ENCODE measurements at regions of chr6 and their contacts with region 1.

Region 1: DNA sequence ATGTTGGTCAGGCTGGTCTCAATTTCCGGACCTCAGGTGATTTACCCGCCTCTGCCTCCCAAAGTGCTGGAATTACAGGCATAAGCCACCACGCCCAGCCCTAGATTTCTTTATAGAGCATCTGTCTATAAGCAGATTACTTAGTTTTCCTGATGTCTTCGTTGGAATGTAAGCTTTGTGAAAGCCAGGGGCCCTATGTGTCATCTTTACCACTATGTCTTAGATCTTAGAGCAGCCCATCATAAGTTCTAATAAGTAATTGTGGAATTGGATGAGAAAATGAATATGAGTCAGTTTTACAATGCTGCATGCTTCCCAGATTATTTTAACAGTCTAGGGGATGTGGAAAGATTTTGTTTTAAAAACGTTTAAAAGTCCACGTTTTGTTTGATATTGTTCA is 9.1 kb upstream of the ZBTB2 start:
- DNase-seq: no peak
- H3K4me3 ChIP-seq: no peak overlapping the region
- H3K27ac ChIP-seq: no peak overlapping the region
- H3K4me1 ChIP-seq: peaks cover 15 to 76% (median 48%) of the 10 kb centered on the region in 6 donors
- H3K27me3 ChIP-seq: no peaks in the 10 kb centered on the region
- CTCF ChIP-seq: no peak
- POLR2A ChIP-seq: no peak

Region 2: DNA sequence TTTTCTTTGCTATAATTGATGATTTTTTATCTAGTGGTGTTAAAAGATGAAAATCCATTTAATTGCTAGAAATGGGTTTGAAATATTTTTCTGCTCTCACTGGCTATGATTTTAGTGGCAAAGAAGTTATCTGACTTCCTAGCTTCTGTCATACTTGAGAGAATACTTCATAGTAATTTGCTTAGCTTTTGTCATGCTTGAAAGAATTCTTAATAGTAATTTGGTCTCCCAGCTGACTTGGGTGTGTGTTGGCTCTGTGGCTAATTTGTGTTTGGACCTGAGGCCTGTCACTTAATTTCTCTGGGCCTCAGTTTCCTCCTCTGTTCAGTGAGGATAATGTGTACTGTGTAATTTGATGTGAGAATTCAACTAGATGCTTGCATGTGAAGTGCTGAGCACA is 64.2 kb after region 1 on chr6:
- intact Hi-C with region 1: loop called (anchors 5 kb)
- DNase-seq: no peak
- H3K4me3 ChIP-seq: no peak overlapping the region
- H3K27ac ChIP-seq: no peak overlapping the region
- H3K4me1 ChIP-seq: peaks cover 0 to 19% (median 0%) of the 10 kb centered on the region in 6 donors
- H3K27me3 ChIP-seq: no peaks in the 10 kb centered on the region
- CTCF ChIP-seq: no peak
- POLR2A ChIP-seq: no peak

Region 3: DNA sequence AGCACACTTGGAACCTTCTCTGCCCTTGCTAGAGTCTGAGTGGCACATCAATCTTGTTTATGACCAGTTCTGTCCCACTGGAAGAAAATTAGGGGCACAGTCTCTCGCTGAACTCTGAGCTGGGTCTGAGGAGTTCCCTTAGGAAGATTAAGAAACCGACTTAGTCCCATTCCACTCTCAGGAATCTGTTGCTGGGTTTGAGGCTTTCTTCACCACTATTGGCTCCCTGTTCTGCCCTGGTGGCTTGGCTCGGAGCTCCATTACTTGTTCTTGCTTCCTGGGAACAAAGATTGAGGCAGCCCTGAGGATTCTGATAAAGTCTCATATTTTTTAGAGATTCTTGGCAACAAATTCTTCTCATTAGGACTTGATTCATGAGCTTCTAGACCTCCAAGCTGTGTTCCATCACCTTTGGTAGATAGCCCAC is 209.1 kb after region 1 on chr6:
- intact Hi-C with region 1: no loop called
- DNase-seq: no peak
- H3K4me3 ChIP-seq: no peak overlapping the region
- H3K27ac ChIP-seq: peak overlapping the region in 3 of 8 donors; percentile 5 to 38 (median 19)
- H3K4me1 ChIP-seq: no peaks in the 10 kb centered on the region
- H3K27me3 ChIP-seq: no peaks in the 10 kb centered on the region
- CTCF ChIP-seq: no peak
- POLR2A ChIP-seq: no peak

Measured in spleen (tissue), 13 donors.